WTC11 (cell line): ENCODE measurements at regions of chr6 and their contacts with region 1.

Region 1: DNA sequence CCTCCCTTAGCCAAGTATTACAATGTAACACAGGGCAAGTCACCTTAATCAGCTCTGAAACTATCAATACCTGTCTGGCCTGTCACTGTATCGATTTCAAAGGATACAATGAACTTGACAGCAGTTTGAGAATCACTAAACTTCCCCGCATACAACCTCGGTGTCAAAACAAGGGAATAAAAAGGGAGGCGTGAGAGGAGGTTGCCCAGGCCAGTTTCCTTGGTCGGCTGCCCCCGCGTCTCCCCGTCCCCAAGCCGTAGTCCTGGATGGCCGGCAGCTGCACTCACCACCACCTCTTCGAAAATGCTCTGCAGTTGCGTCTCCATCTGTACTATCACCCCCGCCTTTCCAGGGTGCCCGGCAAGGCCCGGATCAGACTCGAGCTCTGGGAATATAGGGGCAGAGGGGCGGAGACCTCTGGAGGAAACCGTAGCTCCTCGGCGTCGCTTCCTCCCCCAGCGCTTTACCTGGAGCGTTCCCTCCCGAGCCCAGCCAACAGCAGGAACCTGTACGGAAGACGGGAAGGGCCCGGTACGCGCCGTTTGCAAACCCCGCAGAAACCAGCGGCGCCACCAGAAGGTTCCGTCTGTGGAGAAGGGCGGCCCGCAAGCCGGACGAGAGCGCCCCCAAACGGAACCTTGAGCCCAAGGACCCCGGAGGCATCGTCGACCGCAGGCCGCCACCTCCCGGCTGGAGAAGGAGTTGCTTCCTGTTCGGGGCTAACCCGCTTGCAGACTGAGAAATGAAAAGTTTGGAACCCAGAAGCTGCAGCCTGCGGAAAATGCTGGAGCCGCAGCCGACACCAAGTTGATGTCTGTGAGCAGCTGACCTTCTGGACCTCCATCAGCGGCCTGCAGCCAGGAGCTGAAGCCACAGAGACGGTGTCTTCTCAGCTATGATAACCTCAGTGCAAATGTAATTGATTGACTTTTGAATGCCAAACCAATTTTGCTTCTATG is at the start of gene MED23:
- DNase-seq: peak; percentile 98
- ATAC-seq: peak; percentile 98
- H3K4me3 Mint-ChIP-seq: peak within 1 kb of the TSS; percentile 98
- H3K27ac Mint-ChIP-seq: peak within 1 kb of the TSS; percentile 99
- H3K4me1 Mint-ChIP-seq: peaks cover 13% of the 10 kb centered on the region
- H3K27me3 Mint-ChIP-seq: peaks cover 22% of the 10 kb centered on the region
- CTCF ChIP-seq: peak; percentile 95
- total RNA-seq, gene MED23: 18.0 to 19.0 TPM (median 18.3 TPM) in 3 replicates

Region 2: DNA sequence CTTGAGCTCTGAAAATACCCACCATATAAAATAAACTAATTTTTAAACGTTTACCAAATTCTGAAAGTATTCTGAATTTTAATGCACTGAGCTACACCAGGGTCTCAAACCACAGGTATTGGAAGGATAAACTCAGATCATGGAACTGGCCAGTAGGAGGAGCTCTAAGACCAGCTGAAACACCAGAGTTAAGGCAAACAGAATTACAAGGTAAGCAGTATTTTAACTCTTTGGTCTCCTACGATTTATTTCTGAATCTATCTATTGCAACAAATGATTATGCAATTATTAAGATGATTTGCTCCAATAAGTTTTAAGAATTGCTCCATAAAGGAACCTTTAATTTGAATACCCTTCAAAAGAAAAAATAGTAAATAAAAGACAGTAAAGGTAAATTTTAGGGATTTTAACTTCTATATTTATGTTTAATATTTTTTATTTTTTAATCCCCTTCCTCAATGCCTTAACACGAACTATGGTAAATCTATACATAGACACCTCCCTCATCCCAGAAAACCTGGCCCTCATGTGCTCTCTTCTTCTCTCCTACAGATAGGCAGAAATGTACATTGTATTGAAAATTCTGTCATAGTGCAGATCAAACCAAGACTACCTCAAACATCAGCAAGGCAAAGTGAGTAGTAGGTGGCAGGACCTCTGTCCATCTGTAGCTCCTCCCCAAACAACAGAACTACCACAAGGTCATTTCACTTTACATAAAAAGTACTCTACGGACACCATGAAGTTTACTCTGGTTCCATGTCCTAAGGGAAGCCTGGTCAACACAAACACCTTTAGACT is 742.4 kb before region 1 on chr6:
- CTCF ChIA-PET with region 1: interaction called, 16 read pairs
- POLR2A ChIA-PET with region 1: no interaction called
- DNase-seq: peak; percentile 72
- ATAC-seq: peak; percentile 82
- H3K4me3 Mint-ChIP-seq: no peak overlapping the region
- H3K27ac Mint-ChIP-seq: no peak overlapping the region
- H3K4me1 Mint-ChIP-seq: peaks cover 3% of the 10 kb centered on the region
- H3K27me3 Mint-ChIP-seq: no peaks in the 10 kb centered on the region
- CTCF ChIP-seq: peak; percentile 83

Region 3: DNA sequence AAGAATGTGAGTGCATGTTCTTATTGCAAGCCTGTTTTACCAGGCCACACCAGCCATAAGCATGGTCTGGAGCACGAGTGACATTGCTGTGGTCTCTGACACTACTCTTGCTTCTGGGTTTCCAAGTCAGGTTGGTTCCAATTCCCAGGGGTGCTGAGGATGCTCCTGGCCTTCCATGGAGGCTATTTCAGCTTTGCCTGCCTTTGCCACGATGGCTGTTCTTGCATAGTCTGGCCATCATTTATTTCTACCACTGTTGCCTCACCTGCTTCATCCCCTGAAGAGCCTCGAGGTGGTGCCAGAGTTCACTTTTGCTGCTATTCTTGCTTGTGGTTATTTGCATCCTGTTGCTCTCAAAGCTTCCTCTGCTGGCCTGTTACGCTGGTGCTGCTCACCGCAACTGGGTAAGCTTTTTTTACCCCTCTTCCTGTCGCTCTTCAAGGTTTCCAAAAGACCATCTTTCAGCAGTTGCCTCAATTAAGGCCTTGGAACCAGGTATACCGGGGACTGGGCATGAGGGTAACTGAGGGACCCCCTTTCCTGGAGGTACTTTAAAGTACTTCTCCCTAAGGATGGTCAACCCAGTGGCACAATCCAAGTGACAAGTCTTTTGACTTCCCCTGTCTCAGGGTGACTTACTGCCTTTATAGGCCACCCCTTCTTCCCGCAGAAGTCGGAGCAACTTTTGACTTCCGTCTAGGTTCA is 428.3 kb before region 1 on chr6:
- CTCF ChIA-PET with region 1: interaction called, 11 read pairs
- POLR2A ChIA-PET with region 1: no interaction called
- DNase-seq: peak; percentile 61
- ATAC-seq: peak; percentile 99
- H3K4me3 Mint-ChIP-seq: peak overlapping the region; percentile 8
- H3K27ac Mint-ChIP-seq: 0 out of 2 replicates have a peak overlapping the region, but pooled peaks have one; percentile 25
- H3K4me1 Mint-ChIP-seq: peaks cover 33% of the 10 kb centered on the region
- H3K27me3 Mint-ChIP-seq: no peaks in the 10 kb centered on the region; the same call in 1 of the 2 replicates
- CTCF ChIP-seq: peak; percentile 46

Region 4: GRCh38 chr6:131597446-131597845 is 30.6 kb before region 1 on chr6:
- CTCF ChIA-PET with region 1: interaction called, 15 read pairs
- POLR2A ChIA-PET with region 1: no interaction called
- DNase-seq: no peak
- ATAC-seq: no peak
- H3K4me3 Mint-ChIP-seq: no peak overlapping the region
- H3K27ac Mint-ChIP-seq: no peak overlapping the region
- H3K4me1 Mint-ChIP-seq: no peaks in the 10 kb centered on the region
- H3K27me3 Mint-ChIP-seq: no peaks in the 10 kb centered on the region
- CTCF ChIP-seq: 0 out of 2 replicates have a peak, but pooled peaks have one; percentile 11

Region 5: GRCh38 chr6:131640100-131640499 is 12.1 kb after region 1 on chr6:
- CTCF ChIA-PET with region 1: interaction called, 57 read pairs
- POLR2A ChIA-PET with region 1: interaction called, 4 read pairs
- DNase-seq: no peak
- ATAC-seq: no peak
- H3K4me3 Mint-ChIP-seq: no peak overlapping the region
- H3K27ac Mint-ChIP-seq: no peak overlapping the region
- H3K4me1 Mint-ChIP-seq: no peaks in the 10 kb centered on the region
- H3K27me3 Mint-ChIP-seq: peaks cover 15% of the 10 kb centered on the region
- CTCF ChIP-seq: no peak

Region 6: GRCh38 chr6:131787766-131788712 is 160.0 kb after region 1 on chr6:
- CTCF ChIA-PET with region 1: interaction called, 10 read pairs
- POLR2A ChIA-PET with region 1: no interaction called
- DNase-seq: no peak
- ATAC-seq: peak; percentile 71
- H3K4me3 Mint-ChIP-seq: no peak overlapping the region
- H3K27ac Mint-ChIP-seq: no peak overlapping the region
- H3K4me1 Mint-ChIP-seq: peaks cover 10% of the 10 kb centered on the region
- H3K27me3 Mint-ChIP-seq: peaks cover 11% of the 10 kb centered on the region
- CTCF ChIP-seq: no peak